Posterior vena cava (tissue), 2 donors: ENCODE measurements at regions of chr12 and their contacts with region 1.

Region 1: GRCh38 chr12:47634127-47634526 is 71.7 kb downstream of the RPAP3 start:
- DNase-seq: no peak

Region 2: DNA sequence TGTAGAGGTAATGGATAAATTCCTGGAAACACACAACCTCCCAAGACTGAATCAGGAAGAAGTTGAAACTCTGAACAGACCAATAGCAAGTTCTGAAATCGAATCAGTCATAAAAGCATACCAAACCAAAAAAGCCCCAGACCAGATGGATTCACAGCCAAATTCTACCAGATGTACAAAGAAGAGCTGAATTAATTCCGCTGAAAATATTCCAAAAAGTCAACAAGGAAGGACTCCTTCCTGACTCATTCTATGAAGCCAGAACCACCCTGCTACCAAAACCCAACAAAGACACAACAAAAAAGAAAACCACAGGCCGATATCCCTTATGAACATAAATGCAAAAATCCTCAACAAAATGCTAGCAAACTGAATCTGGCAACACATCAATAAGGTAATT is 889.8 kb before region 1 on chr12:
- intact Hi-C with region 1: loop called in 1 of 2 experiments (anchors 5 kb)
- DNase-seq: no peak